Activated CD4-positive, alpha-beta T cell treated with anti-CD3 and anti-CD28 coated beads for 36 hours (primary cell): ENCODE measurements at regions of chr19 and their contacts with region 1.

Region 1: GRCh38 chr19:23222998-23223652 is 27.1 kb downstream of the ZNF724 start:
- DNase-seq: no peak
- ATAC-seq: no peak
- H3K4me3 Mint-ChIP-seq: no peak overlapping the region
- H3K27ac Mint-ChIP-seq: no peak overlapping the region
- H3K4me1 Mint-ChIP-seq: no peaks in the 10 kb centered on the region
- H3K27me3 Mint-ChIP-seq: no peaks in the 10 kb centered on the region

Region 2: GRCh38 chr19:23249911-23250649 is 27.0 kb after region 1 on chr19 and contains the start of gene ZNF724:
- CTCF ChIA-PET with region 1: no interaction called
- POLR2A ChIA-PET with region 1: no interaction called
- intact Hi-C with region 1: no loop called
- DNase-seq: peak; percentile 94
- ATAC-seq: peak; percentile 100
- H3K4me3 Mint-ChIP-seq: peak within 1 kb of the TSS; percentile 87
- H3K27ac Mint-ChIP-seq: peak within 1 kb of the TSS; percentile 96
- H3K4me1 Mint-ChIP-seq: peaks cover 12% of the 10 kb centered on the region
- H3K27me3 Mint-ChIP-seq: no peaks in the 10 kb centered on the region
- total RNA-seq, gene ZNF724: 15.1 to 19.1 TPM

Region 3: DNA sequence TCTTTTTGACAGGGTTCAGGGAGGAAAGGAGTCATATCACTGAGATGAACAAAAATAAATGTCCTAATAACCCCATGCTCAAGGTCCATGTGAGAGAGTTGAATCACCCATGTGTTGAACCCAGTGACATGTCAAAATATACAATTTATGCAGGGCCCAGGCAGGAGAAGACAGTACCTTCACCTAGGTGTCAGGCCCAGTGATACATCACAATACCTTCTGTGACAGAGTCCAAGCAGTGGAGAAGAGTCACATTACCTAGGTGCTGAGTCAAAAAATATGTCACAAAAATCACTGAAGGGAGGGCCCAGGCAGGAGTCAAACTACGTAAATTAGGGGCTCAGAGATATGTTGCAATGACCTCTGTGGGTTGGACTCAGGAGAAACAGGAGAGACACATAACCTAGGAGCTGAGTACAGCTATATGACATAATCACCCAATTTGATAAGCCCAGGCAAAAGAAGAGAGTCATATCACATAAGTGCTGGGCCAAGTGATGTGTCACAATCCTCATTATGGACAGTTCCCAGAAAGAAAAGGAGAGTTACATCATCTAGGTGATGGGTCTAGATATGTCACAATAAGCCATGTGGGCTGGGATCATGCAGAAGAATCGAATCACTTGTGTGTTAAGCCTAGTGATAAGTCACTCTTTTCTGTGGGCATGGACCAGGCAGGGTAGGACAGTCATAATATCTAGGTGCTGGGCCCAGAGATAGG is 40.9 kb after region 1 on chr19:
- CTCF ChIA-PET with region 1: no interaction called
- POLR2A ChIA-PET with region 1: no interaction called
- intact Hi-C with region 1: no loop called
- DNase-seq: peak; percentile 44
- ATAC-seq: peak; percentile 89
- H3K4me3 Mint-ChIP-seq: no peak overlapping the region
- H3K27ac Mint-ChIP-seq: peak overlapping the region; percentile 22
- H3K4me1 Mint-ChIP-seq: peaks cover 8% of the 10 kb centered on the region
- H3K27me3 Mint-ChIP-seq: no peaks in the 10 kb centered on the region

Region 4: GRCh38 chr19:23925285-23925684 is 702.2 kb after region 1 on chr19:
- CTCF ChIA-PET with region 1: no interaction called
- POLR2A ChIA-PET with region 1: no interaction called
- intact Hi-C with region 1: loop called in 1 of 2 experiments (anchors 10 kb)
- DNase-seq: no peak
- ATAC-seq: no peak
- H3K4me3 Mint-ChIP-seq: no peak overlapping the region
- H3K27ac Mint-ChIP-seq: no peak overlapping the region
- H3K4me1 Mint-ChIP-seq: no peaks in the 10 kb centered on the region
- H3K27me3 Mint-ChIP-seq: no peaks in the 10 kb centered on the region